ENCODE measurements at regions of chr15 and their contacts with region 1.

Region 1: DNA sequence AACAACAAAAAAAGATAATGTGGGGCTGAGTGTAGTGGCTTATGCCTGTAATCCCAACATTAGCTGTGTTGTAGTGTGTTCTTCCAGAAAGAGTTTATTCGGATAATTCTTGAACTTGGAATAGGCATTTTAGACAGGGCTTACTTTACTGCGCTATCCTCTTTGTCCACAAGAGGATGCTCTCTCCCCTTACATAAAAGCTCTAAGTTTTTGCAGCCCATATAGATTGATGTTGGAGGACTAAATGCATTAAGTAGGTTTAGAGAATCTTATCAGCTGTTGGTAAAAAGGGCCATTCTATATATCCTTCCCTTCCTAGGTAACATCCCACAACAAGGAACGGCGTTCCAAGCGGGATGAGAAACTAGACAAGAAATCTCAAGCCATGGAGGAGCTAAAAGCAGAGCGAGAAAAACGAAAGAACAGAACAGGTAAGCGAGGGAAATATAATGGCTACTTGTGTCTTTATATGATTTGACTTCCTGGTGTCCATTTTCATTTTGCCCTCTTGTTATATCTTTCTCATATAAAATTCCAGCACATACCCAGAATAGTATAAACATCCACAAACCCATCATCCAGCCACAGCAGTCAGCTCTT is 27.8 kb upstream of the ITPKA start:
- DNase-seq: peak; percentile 52
- CTCF ChIP-seq: peak; percentile 82

Region 2: DNA sequence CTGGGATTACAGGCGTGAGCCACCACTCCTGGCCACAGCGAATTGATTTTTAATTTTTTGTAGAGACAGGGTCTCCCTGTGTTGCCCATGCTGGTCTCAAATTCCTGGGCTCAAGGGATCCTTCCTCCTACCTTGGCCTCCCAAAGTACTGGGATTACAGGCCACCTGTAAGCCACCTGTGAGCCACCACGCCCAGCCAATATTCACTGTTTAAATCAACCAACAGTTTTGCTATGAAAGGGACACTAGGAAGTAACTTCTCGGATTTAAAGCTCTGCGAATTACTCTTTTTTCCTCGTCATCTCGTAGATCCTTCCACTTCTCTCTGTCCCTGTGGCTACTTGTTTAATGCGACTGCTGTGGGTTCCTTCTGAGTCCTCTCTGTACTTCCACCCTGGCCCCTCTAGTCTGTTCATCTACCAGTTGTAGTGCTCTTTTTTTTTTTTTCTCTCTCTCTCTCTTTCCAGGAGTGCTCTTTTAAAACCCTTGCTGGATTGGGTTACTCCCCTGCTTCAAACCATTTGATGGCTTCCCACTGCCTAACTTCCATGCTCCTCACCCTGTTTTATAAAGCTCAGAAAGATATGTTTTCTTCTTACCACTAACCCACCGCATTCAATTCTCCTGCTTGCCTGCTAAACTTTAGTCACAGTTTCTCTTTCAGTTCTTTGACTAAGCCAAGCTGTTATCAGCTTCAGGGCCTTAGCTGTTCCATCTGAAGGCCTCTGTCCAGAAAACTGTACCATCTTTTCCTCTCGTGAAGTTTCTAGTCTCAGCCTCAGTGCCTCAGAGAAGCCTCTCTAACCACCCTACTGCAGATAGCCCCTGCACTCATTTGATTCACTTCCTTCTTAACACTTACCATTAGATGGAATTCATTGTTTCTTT is 36.7 kb before region 1 on chr15:
- CTCF ChIA-PET with region 1: no interaction called
- POLR2A ChIA-PET with region 1: no interaction called
- DNase-seq: peak; percentile 60
- CTCF ChIP-seq: no peak

Region 3: DNA sequence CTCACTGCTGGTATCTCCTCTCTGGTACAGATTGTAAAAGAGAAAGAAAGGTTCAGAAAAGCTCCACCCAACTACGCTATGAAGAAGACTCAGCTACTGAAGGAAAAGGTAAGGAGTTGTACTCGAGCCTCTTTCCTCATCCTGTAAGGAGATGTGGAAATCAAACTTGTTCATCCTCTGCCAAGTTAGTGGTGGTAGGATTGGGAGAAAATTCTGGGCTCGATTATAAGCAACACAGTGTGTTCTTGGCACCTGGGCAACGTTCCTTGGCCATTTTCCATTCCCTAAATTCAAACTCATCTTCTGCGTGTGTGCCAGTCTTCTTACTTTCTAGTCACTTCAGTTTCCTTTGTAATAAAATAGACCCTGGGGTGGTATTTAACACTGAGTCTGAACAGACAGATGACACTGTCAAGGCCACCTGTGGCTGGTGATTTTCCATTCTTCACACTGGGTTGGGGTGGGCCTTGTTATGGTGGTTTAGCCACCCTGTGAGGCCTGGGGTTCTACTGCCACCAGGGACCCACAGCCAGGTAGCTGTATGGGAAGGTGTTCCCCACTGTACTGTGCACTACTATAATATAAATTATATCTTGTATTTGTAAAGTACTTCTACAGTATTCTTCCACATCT is 10.6 kb after region 1 on chr15:
- CTCF ChIA-PET with region 1: interaction called, 41 read pairs
- POLR2A ChIA-PET with region 1: no interaction called
- DNase-seq: no peak
- CTCF ChIP-seq: no peak

Region 4: GRCh38 chr15:41493205-41493901 is 27.4 kb after region 1 on chr15 and contains the start of gene ITPKA:
- CTCF ChIA-PET with region 1: interaction called, 10 read pairs
- POLR2A ChIA-PET with region 1: no interaction called
- DNase-seq: peak; percentile 95
- CTCF ChIP-seq: no peak

Region 5: DNA sequence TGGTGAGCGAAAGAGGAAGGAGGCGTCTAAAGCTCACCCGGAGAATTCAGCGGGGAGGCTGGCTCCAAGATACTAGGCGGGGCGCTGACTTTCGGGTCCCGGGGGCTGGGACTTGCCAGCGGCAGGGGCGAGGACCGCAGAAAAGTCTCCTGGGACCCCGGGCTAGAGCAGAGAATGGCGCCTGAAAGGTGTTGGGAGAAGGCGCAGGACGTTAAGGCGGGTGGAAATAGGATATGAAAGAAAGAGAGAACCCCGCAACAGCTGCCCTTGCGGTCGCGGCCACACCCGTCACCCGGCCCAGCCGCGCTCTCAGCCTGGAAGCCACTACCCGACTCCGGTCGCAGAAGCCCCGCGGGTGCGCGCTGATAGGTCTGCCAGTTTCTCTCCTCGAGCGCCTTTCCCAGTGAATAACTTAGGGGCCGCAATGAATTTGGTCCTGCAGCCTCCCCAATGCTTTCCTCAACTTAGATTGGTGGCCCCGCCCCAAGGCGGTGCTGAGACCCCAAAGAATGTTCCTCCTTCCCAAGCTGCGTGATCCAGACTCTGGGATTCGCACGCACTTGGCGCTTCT is 47.1 kb after region 1 on chr15:
- CTCF ChIA-PET with region 1: interaction called, 35 read pairs
- POLR2A ChIA-PET with region 1: no interaction called
- DNase-seq: peak; percentile 45
- CTCF ChIP-seq: no peak

Region 6: GRCh38 chr15:41811432-41812195 is 345.7 kb after region 1 on chr15:
- CTCF ChIA-PET with region 1: interaction called, 29 read pairs
- POLR2A ChIA-PET with region 1: no interaction called
- DNase-seq: peak; percentile 86
- CTCF ChIP-seq: peak; percentile 91

Region 7: DNA sequence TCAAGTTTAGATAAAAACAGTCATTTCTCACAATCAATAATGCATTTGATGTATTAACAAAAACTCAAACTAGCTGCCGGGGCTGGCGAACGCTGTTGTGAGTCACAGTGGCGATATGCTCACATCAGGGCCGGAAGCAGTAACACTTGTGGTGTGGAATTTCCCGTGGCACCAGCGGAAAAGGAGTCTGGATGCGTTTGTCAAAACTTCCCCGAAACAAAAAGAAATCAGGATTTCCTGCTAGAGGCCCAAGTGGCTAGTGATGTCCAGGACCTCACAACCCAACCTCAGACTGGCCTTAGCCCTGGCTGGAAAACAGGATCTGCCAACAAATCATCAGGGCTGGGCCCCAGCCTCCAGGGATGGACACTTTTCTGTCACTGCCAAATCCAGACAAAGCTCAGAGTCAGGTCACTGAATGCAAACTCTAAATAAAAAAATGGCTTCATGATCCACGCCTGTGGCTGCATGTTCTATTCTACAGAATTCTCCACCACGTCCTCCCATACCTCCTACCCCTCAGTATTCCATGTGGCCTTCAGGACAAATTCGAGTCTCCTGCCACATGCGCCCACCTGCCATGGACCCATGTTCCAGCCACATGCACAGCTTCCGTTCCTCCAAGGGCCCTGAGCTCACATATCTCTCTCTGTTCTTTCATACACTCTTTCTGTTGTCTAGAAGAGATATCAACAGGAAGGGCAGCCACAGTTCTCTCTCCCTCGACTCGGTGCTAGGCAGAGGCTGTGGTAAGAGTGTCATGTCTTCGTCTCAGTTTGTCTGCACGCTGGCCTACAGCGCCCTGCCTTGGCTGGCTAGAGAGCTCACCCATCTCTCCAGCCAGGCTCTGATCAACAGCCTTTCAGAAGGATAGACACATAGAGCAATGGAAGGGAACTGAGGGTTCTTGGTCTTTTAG is 471.0 kb after region 1 on chr15:
- CTCF ChIA-PET with region 1: no interaction called
- POLR2A ChIA-PET with region 1: no interaction called
- DNase-seq: peak; percentile 66
- CTCF ChIP-seq: peak; percentile 57